ENCODE measurements at regions of chr17 and their contacts with region 1.

Region 1: DNA sequence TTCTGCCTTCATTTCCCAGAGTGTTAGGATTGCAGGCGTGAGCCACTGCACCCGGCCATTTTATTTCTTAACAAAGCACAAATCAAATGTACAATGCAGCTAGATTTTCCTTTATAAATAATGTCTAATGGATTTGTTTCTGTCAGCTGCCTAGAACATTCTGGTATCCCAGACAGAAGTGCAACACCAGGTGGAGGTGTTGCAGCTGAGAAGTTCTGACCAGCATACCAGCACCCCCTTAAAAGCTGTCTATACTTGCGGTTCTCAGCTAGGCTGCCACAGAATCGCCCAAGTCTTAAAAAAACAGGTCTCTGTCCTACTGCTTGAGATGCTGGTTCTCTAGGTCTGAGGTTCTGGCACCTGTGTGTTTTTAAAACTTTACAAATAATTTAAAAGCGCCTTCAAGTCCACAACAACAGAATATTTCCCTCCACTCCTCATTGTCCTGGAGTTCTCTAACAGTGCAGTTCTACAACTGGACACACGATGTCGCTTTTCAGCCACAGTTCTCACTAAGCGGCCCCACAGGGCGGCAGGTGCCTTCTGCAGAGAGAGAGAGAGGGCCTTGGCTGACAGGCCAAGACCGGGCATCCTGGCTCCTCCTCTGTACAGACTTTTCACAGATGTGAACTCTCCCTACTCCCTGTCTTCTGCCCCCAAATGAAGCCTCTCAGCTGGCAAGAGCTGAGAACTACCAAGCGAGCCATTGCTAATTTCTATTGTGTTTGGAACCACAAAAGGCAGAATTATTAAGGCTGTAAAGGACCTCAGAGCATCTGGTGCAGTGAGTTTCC is 32.6 kb upstream of the MEOX1 start:
- DNase-seq: peak; percentile 78
- ATAC-seq: peak; percentile 94
- H3K4me3 ChIP-seq: no peak overlapping the region
- H3K27ac ChIP-seq: no peak overlapping the region
- H3K4me1 ChIP-seq: peaks cover 3 to 9% of the 10 kb centered on the region in 2 experiments; a peak in 3 of 4 replicates
- H3K27me3 ChIP-seq: no peaks in the 10 kb centered on the region
- CTCF ChIP-seq: peak; percentile 81 to 99 (median 92)
- POLR2A ChIP-seq: no peak
- RAD21 ChIP-seq: peak; percentile 98

Region 2: DNA sequence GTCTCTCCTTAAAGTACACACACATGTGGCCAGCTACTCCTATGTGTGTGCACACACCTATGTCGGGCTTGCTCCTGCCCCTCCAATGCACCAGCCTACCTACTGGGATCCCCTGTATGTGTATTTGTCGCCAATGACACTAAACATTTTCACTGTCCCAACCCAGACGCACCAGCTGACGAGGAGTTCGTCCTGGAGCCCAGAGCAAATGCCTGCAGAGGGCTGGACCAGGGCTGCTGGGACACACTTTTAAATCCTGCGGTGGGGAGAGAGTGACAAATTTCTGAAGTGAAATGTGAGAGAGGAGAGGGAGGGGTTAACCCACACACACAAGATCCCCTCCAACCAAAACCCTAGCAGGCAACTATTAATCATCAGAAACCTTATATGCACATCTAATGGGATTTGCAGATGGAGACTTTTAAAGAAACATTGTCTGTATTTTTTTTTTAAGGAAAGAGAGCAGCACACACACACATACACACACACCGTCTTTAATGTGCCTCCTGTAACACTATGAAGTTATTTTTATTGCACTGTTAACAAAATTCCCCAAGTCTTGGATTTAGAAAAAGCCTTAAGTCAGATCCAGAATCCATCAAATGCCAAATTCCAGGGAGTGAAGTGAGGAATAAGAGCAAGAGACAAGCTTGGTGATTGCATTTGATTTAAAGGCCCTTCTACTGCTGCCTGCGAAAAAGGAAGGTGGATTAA is 32.4 kb before region 1 on chr17 and contains the start of gene MEOX1:
- CTCF ChIA-PET with region 1: no interaction called
- POLR2A ChIA-PET with region 1: no interaction called
- RAD21 ChIA-PET with region 1: no interaction called
- intact Hi-C with region 1: no loop called
- DNase-seq: no peak
- ATAC-seq: peak; percentile 75
- H3K4me3 ChIP-seq: no peak within 1 kb of the TSS
- H3K27ac ChIP-seq: no peak within 1 kb of the TSS
- H3K4me1 ChIP-seq: peaks cover 2 to 9% of the 10 kb centered on the region in 2 experiments; a peak in 3 of 4 replicates
- H3K27me3 ChIP-seq: no peaks in the 10 kb centered on the region
- CTCF ChIP-seq: no peak
- POLR2A ChIP-seq: no peak
- RAD21 ChIP-seq: no peak
- total RNA-seq, gene MEOX1: not detected

Region 3: GRCh38 chr17:43760254-43760852 is 66.1 kb after region 1 on chr17:
- CTCF ChIA-PET with region 1: interaction called, 158 read pairs
- POLR2A ChIA-PET with region 1: no interaction called
- RAD21 ChIA-PET with region 1: interaction called, 11 to 15 read pairs
- intact Hi-C with region 1: loop called (anchors 1 kb)
- DNase-seq: peak; percentile 93
- ATAC-seq: peak; percentile 98
- H3K4me3 ChIP-seq: no peak overlapping the region
- H3K27ac ChIP-seq: no peak overlapping the region
- H3K4me1 ChIP-seq: peaks cover 0 to 10% of the 10 kb centered on the region in 2 experiments; a peak in 2 of 4 replicates
- H3K27me3 ChIP-seq: no peaks in the 10 kb centered on the region
- CTCF ChIP-seq: peak; percentile 99 to 100 (median 100)
- POLR2A ChIP-seq: no peak
- RAD21 ChIP-seq: peak; percentile 100

Measured in HCT116 (cell line).